Activated CD4-positive, alpha-beta T cell treated with anti-CD3 and anti-CD28 coated beads for 36 hours (primary cell): ENCODE measurements at regions of chr16 and their contacts with region 1.

Region 1: DNA sequence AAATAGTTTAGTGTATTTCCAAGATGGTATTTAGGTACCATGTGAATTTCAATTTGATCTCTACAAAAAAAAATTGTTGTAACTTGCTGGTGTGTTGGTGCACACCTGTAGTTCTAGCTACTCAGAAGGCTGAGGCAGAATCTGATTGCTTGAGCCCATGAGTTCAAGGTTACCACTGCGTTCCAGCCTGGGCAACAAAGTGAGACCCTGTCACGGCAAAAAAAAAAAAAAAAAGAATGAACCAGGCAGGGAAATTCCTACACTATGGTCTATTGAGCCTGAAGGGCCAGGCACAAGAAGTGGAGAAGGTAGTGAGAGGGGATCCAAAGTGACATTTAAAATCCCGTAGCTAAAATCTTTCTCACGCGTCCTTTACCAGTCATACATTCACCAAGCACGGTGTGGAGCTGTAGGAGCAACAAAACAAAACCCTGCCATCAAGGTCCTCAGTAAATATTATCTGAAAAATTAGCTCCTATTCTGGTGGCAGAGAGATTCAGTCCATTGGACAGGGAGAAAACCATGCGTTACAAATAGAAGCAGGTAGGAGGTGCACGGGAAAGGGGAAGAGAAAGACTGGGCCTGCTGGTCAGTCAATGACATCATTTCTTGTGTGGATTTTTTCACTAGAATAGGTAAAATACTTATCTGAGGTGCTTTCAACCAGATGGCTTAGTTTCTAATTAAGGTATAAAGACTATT is 27.3 kb downstream of the TXNDC11 start:
- DNase-seq: no peak
- ATAC-seq: no peak
- H3K4me3 Mint-ChIP-seq: no peak overlapping the region
- H3K27ac Mint-ChIP-seq: no peak overlapping the region
- H3K4me1 Mint-ChIP-seq: peaks cover 6% of the 10 kb centered on the region
- H3K27me3 Mint-ChIP-seq: no peaks in the 10 kb centered on the region

Region 2: DNA sequence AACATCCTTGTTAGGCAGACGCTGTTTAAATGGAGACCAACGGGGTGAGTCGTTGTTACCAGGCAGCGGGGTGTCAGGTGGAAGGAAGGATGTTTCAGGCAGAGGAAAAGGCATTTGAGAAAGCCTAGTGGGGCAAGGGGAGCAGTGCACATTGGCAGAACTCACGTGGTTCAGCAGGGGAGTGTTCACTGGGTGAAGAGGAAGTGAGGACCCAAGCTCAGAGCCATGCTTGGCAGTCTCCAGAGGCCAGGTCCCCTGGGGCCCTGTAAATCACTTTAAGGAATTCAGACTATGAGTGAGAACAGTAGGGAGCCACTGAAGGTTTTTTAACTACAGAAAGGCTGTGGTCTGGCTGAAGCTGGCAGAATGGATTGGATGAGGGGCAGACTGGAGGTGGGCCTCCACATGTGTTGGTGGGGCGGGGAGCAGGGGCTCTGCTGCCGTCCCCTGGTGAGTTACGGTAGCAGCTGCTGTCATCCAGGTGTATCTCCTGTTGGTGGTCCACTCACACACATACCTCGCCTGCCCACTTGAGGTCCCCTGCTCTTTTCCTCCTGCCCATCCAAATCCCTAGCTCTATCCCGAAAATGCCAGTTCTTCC is 765.9 kb before region 1 on chr16:
- CTCF ChIA-PET with region 1: interaction called, 3 read pairs
- POLR2A ChIA-PET with region 1: no interaction called
- intact Hi-C with region 1: loop called (anchors 5 to 10 kb)
- DNase-seq: peak; percentile 69
- ATAC-seq: peak; percentile 81
- H3K4me3 Mint-ChIP-seq: no peak overlapping the region
- H3K27ac Mint-ChIP-seq: peak overlapping the region; percentile 70
- H3K4me1 Mint-ChIP-seq: peaks cover 63% of the 10 kb centered on the region
- H3K27me3 Mint-ChIP-seq: no peaks in the 10 kb centered on the region

Region 3: GRCh38 chr16:11396241-11397048 is 319.0 kb before region 1 on chr16:
- CTCF ChIA-PET with region 1: interaction called, 3 read pairs
- POLR2A ChIA-PET with region 1: no interaction called
- intact Hi-C with region 1: loop called (anchors 2 to 5 kb)
- DNase-seq: peak; percentile 82
- ATAC-seq: peak; percentile 88
- H3K4me3 Mint-ChIP-seq: no peak overlapping the region
- H3K27ac Mint-ChIP-seq: no peak overlapping the region
- H3K4me1 Mint-ChIP-seq: no peaks in the 10 kb centered on the region
- H3K27me3 Mint-ChIP-seq: no peaks in the 10 kb centered on the region

Region 4: GRCh38 chr16:11535471-11535870 is 179.9 kb before region 1 on chr16:
- CTCF ChIA-PET with region 1: interaction called, 25 read pairs
- POLR2A ChIA-PET with region 1: no interaction called
- intact Hi-C with region 1: loop called (anchors 1 kb)
- DNase-seq: no peak
- ATAC-seq: no peak
- H3K4me3 Mint-ChIP-seq: no peak overlapping the region
- H3K27ac Mint-ChIP-seq: no peak overlapping the region
- H3K4me1 Mint-ChIP-seq: peaks cover 11% of the 10 kb centered on the region
- H3K27me3 Mint-ChIP-seq: no peaks in the 10 kb centered on the region

Region 5: GRCh38 chr16:11698271-11698689 is 17.1 kb before region 1 on chr16:
- CTCF ChIA-PET with region 1: interaction called, 22 read pairs
- POLR2A ChIA-PET with region 1: no interaction called
- intact Hi-C with region 1: no loop called
- DNase-seq: peak; percentile 67
- ATAC-seq: peak; percentile 92
- H3K4me3 Mint-ChIP-seq: no peak overlapping the region
- H3K27ac Mint-ChIP-seq: peak overlapping the region; percentile 76
- H3K4me1 Mint-ChIP-seq: peaks cover 47% of the 10 kb centered on the region
- H3K27me3 Mint-ChIP-seq: no peaks in the 10 kb centered on the region